A549 (cell line): ENCODE measurements at regions of chr9 and their contacts with region 1.

Region 1: GRCh38 chr9:95004411-95005277 is 278.1 kb downstream of the AOPEP start:
- DNase-seq: peak in 1 of 2 experiments; percentile 74
- ATAC-seq: peak; percentile 57 to 76
- H3K4me3 ChIP-seq: peak overlapping the region; percentile 87
- H3K27ac ChIP-seq: peak overlapping the region; percentile 99 to 100
- H3K4me1 ChIP-seq: peaks cover 44% of the 10 kb centered on the region
- CTCF ChIP-seq: no peak
- EP300 ChIP-seq: no peak; a peak in 1 of 5 replicates
- POLR2A ChIP-seq: peak; percentile 38; the same call in 1 of the 2 replicates
- RAD21 ChIP-seq: no peak; a peak in 1 of 5 replicates

Region 2: DNA sequence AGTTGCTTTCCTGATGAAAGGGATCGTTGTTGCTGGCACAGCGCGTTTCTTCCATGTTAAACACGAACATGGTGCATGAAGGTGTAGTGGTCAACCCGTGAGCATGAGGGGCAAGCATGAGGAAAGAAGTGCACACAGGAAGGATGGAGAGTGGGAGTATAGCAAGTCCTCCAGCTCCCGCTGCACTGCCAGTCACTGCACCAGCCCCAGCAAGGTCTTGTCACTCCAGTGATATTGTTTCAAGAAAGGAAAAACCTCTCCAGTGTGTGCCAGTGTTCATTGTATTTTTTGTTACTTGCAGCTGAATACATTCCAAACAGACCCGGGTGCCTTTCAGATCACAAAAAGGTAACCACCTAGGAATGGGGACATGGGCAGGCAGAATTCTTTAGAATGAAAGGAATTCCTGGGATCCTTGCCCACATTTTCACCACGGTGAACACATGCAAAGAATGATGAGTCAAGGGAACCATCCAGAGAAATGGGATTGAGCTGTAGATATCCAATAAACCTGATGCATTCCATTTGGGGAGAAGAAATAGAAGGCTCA is 91.9 kb before region 1 on chr9:
- CTCF ChIA-PET with region 1: interaction called, 7 read pairs
- POLR2A ChIA-PET with region 1: interaction called, 93 read pairs
- DNase-seq: peak; percentile 73 to 93
- ATAC-seq: peak; percentile 28 to 47
- H3K4me3 ChIP-seq: no peak overlapping the region
- H3K27ac ChIP-seq: peak overlapping the region; percentile 97 to 99
- H3K4me1 ChIP-seq: peaks cover 96% of the 10 kb centered on the region
- CTCF ChIP-seq: no peak
- EP300 ChIP-seq: peak; percentile 72 to 92; a peak in 3 of 5 replicates
- POLR2A ChIP-seq: no peak
- RAD21 ChIP-seq: peak; percentile 42 to 58; a peak in 4 of 5 replicates

Region 3: DNA sequence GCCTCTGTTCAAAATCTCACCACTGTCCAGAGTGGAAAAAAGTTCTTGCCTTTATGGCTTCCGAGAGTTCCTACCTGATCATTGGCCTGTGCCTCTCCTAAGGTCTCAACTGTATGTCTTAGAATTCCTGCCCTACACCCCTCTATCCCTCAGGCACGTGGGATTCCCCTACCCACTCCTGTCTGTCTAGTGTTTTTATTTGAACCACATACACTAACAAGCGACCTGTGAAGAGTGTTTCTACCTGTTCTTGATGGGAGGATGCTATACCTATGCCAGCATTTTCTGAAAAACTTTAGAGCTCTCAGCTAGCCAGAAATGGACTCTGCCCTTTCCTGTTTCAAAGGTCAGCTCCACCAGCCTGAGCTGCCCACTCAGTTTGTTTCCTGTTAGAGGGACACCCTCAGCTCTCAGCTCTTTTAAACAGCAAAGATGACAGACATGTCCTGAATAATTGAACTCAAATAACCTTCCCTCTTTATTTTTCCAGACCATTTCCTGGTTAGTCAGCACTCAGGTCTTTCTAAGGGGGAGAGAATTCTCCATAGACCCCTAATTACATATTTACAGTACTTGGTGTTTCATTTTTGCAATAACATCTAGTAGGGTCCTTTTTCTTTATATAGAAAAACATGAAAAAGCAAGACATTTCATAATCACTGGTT is 63.3 kb before region 1 on chr9:
- CTCF ChIA-PET with region 1: no interaction called
- POLR2A ChIA-PET with region 1: interaction called, 11 read pairs
- DNase-seq: peak; percentile 47 to 91
- ATAC-seq: peak; percentile 64 to 82
- H3K4me3 ChIP-seq: no peak overlapping the region
- H3K27ac ChIP-seq: peak overlapping the region; percentile 92 to 93
- H3K4me1 ChIP-seq: peaks cover 79% of the 10 kb centered on the region
- CTCF ChIP-seq: no peak
- EP300 ChIP-seq: peak; percentile 73 to 75; a peak in 3 of 5 replicates
- POLR2A ChIP-seq: no peak
- RAD21 ChIP-seq: peak; percentile 25 to 51; a peak in 4 of 5 replicates

Region 4: GRCh38 chr9:95025213-95026147 is 20.8 kb after region 1 on chr9:
- CTCF ChIA-PET with region 1: interaction called, 8 read pairs
- POLR2A ChIA-PET with region 1: interaction called, 15 read pairs
- DNase-seq: peak in 1 of 2 experiments; percentile 93
- ATAC-seq: peak; percentile 71 to 76
- H3K4me3 ChIP-seq: peak overlapping the region; percentile 11; the same call in 1 of the 3 replicates
- H3K27ac ChIP-seq: peak overlapping the region; percentile 86 to 99
- H3K4me1 ChIP-seq: peaks cover 100% of the 10 kb centered on the region
- CTCF ChIP-seq: no peak
- EP300 ChIP-seq: peak in 1 of 2 experiments; percentile 60; a peak in 2 of 5 replicates
- POLR2A ChIP-seq: no peak
- RAD21 ChIP-seq: peak; percentile 41 to 43; a peak in 4 of 5 replicates